A549 (cell line): ENCODE measurements at regions of chr1 and their contacts with region 1.

Region 1: GRCh38 chr1:205711104-205712020 is 31.1 kb upstream of the SLC45A3 start:
- DNase-seq: peak; percentile 59 to 80
- ATAC-seq: peak; percentile 89 to 92
- H3K4me3 ChIP-seq: no peak overlapping the region
- H3K27ac ChIP-seq: no peak overlapping the region
- H3K4me1 ChIP-seq: peaks cover 10% of the 10 kb centered on the region; the same call in 2 of the 3 replicates
- CTCF ChIP-seq: peak; percentile 91
- EP300 ChIP-seq: no peak
- POLR2A ChIP-seq: no peak
- RAD21 ChIP-seq: peak; percentile 66 to 78

Region 2: DNA sequence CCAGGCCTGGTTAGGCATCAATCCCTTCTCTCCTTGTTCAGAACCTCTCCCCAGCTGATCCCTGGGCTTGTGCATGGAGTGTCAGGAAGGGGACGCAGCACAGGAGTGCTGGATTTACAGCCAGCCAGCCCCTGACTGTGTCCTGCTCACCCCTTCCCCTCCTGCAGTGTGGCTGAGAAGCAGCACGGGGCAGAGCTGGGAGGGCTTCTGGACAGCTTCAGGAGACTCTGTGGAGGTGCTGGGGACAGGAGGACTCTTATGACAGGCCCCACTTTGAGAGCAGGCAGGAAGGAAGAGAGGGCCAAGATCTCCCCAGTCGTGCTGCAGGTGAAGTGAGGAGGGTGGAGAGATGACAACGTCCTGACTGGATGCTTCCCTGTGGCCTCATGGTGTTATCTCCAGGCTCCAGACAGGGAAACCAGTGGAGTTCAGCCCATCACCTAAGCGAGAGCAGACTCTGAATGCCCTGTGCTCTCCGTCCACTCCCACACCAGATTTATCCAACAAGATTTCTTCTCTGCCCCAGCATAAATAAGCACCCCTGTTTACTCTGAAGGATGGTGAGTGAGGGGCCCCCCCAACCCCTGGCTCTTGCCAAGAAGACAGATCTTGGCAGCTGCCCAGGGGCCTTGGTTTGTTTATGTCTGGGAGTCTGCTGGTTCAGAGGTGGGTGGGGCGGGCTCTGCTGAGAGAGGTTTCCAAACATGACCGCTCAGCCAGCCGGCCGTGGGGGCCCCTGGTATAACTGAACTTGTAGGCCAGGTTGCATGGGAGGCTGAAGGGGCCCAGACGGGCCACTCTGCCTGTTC is 462.4 kb before region 1 on chr1:
- CTCF ChIA-PET with region 1: no interaction called
- POLR2A ChIA-PET with region 1: no interaction called
- DNase-seq: no peak
- ATAC-seq: peak; percentile 42 to 63; a peak in 4 of 6 replicates
- H3K4me3 ChIP-seq: no peak overlapping the region
- H3K27ac ChIP-seq: peak overlapping the region in 1 of 2 experiments; percentile 51; a peak in 1 of 6 replicates
- H3K4me1 ChIP-seq: peaks cover 12% of the 10 kb centered on the region
- CTCF ChIP-seq: no peak
- EP300 ChIP-seq: no peak
- POLR2A ChIP-seq: no peak
- RAD21 ChIP-seq: no peak

Region 3: DNA sequence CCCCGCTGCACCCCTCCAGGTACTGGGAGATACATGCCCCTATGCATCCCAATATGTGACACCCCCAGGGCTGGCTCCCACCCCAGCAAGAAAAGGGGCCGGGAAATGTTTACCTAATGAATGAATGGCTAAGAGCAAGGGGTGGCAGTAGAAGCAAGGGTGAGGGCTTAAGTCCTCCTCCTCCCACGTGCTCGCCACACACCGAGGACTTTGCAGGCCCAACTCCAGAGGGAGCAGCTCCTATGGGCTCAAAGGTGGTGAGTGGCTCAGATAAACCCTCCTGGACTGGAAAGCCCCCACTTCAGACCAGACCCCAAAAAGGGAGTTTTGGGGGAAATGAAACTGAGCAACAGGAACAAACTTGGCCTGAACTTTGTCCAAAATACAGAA is 42.4 kb before region 1 on chr1:
- CTCF ChIA-PET with region 1: interaction called, 23 read pairs
- POLR2A ChIA-PET with region 1: no interaction called
- DNase-seq: no peak
- ATAC-seq: 0 out of 6 replicates have a peak, but pooled peaks of 1 of the 2 experiments have one; percentile 29
- H3K4me3 ChIP-seq: no peak overlapping the region
- H3K27ac ChIP-seq: peak overlapping the region in 1 of 2 experiments; percentile 56; a peak in 3 of 6 replicates
- H3K4me1 ChIP-seq: peaks cover 20% of the 10 kb centered on the region; the same call in 2 of the 3 replicates
- CTCF ChIP-seq: no peak
- EP300 ChIP-seq: no peak
- POLR2A ChIP-seq: no peak
- RAD21 ChIP-seq: no peak

Region 4: DNA sequence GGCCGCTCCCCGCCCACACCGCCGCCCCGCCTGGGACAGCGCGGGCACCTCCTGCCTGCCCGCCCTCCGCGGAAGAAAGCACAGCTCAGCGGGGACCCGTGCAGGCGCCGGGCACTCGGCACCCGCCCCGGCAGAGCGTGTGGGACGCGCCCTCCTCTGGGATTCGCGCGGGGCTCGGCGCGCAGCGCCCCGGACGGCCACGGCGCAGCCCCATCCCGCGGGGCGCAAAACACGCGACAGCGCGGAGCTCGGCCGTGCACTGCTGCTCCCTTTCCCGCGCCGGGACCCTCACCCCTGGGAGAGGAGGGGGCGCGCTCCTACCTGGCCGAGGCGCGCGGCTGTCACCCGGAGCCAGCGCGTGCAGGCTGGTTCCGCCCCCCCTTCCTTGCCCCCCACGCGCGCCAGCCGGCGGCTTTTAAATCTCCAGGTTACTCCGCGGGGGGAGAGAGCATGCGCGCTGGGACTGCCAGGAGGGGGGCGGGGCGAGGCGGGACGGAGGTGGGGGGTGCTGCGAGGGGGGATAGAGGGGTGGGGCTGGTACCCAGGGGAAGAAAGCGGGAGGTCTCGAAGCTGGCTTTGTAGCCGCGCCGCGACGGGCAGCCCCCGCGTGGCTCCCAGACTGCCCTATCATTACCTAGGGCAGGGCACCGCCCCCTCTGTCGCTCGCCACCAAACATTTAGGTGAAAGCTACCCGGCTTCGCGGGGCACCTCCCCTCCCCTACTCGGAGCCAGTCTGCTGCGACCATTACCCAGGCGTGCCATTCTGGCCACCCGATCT is 31.1 kb before region 1 on chr1 and contains the start of gene SLC45A3:
- CTCF ChIA-PET with region 1: interaction called, 16 read pairs
- POLR2A ChIA-PET with region 1: interaction called, 6 read pairs
- DNase-seq: peak; percentile 23 to 69
- ATAC-seq: peak; percentile 79 to 85
- H3K4me3 ChIP-seq: peak within 1 kb of the TSS; percentile 85
- H3K27ac ChIP-seq: peak within 1 kb of the TSS; percentile 76 to 94
- H3K4me1 ChIP-seq: peaks cover 8% of the 10 kb centered on the region
- CTCF ChIP-seq: no peak
- EP300 ChIP-seq: no peak
- POLR2A ChIP-seq: no peak
- RAD21 ChIP-seq: no peak
- polyA plus RNA-seq, gene SLC45A3: 2.8 and 3.0 TPM in 2 replicates

Region 5: DNA sequence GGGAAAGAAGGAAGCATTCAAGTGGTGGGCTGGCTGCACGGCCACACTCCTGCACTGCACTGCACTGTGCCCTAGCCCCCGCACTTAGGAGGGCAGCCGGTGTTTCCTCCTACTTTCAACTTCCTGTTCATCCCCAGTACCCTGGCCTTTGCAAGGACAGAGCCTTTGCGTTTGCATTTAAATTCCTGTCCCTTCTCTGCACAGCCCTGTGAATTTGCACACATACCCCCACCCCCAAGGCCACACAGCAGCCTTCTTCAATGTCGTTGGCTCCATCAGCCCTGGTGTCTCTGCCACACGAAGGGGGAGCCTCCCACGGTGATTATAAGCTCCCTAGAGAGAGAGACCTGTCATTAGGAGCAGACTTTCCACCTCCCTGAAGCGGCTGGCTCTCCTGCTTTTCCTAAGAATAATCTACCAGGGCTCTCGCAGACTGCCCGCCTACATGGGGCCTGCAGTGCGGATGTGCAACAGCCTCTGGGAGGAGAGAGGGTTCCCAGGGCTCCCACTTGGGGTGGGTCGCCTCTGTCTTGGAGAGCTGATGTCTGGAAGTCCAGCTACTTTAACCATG is 17.9 kb before region 1 on chr1:
- CTCF ChIA-PET with region 1: interaction called, 85 read pairs
- POLR2A ChIA-PET with region 1: no interaction called
- DNase-seq: no peak
- ATAC-seq: no peak
- H3K4me3 ChIP-seq: no peak overlapping the region
- H3K27ac ChIP-seq: no peak overlapping the region
- H3K4me1 ChIP-seq: 0 out of 3 replicates have a peak, but pooled peaks cover 3% of the 10 kb centered on the region
- CTCF ChIP-seq: no peak
- EP300 ChIP-seq: no peak
- POLR2A ChIP-seq: no peak
- RAD21 ChIP-seq: no peak

Region 6: GRCh38 chr1:205700865-205701401 is 10.4 kb before region 1 on chr1:
- CTCF ChIA-PET with region 1: interaction called, 85 read pairs
- POLR2A ChIA-PET with region 1: no interaction called
- DNase-seq: no peak
- ATAC-seq: peak in 1 of 2 experiments; percentile 9; a peak in 3 of 6 replicates
- H3K4me3 ChIP-seq: no peak overlapping the region
- H3K27ac ChIP-seq: no peak overlapping the region
- H3K4me1 ChIP-seq: no peaks in the 10 kb centered on the region
- CTCF ChIP-seq: no peak
- EP300 ChIP-seq: no peak
- POLR2A ChIP-seq: no peak
- RAD21 ChIP-seq: no peak

Region 7: DNA sequence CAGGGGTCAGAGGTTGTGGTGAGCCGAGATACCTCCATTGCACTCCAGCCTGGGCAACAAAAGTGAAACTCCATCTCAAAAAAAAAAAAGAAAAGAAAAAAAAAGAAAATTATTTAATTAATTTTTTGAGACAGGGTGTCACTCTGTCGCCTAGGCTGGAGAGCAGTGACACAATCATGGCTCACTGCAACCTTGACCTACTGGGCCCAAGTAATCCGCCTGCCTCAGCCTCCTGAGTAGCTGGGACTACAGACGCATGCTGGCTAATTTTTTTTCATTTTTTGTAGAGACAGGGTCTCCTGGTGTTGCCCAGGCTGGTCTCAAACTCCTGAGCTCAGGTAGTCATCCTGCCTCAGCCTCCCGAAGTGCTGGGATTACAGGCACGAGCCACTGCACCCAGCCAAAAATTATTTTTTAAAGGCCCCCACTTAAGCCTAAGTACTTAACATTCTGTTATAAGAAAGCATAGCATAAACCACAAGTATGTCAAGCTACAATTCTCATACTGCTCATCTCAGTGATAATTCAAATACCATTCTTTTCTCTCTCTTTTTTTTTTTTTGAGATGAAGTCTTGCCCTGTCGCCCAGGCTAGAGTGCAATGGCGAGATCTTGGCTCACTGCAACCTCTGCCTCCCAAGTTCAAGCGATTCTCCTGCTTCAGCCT is 18.7 kb after region 1 on chr1:
- CTCF ChIA-PET with region 1: interaction called, 97 read pairs
- POLR2A ChIA-PET with region 1: no interaction called
- DNase-seq: no peak
- ATAC-seq: no peak; a peak in 1 of 6 replicates
- H3K4me3 ChIP-seq: no peak overlapping the region
- H3K27ac ChIP-seq: no peak overlapping the region
- H3K4me1 ChIP-seq: peaks cover 33% of the 10 kb centered on the region
- CTCF ChIP-seq: no peak
- EP300 ChIP-seq: no peak
- POLR2A ChIP-seq: no peak
- RAD21 ChIP-seq: no peak

Region 8: GRCh38 chr1:205739348-205740160 is 28.2 kb after region 1 on chr1:
- CTCF ChIA-PET with region 1: interaction called, 13 read pairs
- POLR2A ChIA-PET with region 1: interaction called, 5 read pairs
- DNase-seq: peak in 1 of 2 experiments; percentile 53
- ATAC-seq: peak; percentile 55 to 69; a peak in 5 of 6 replicates
- H3K4me3 ChIP-seq: no peak overlapping the region
- H3K27ac ChIP-seq: 0 out of 6 replicates have a peak overlapping the region, but pooled peaks of 1 of the 2 experiments have one; percentile 10
- H3K4me1 ChIP-seq: peaks cover 39% of the 10 kb centered on the region
- CTCF ChIP-seq: peak; percentile 17; the same call in 1 of the 3 replicates
- EP300 ChIP-seq: no peak
- POLR2A ChIP-seq: no peak
- RAD21 ChIP-seq: no peak